ENCODE measurements at regions of chr22 and their contacts with region 1.

Region 1: GRCh38 chr22:49767355-49768062 is 60.2 kb downstream of the BRD1 start:
- DNase-seq: peak; percentile 28
- H3K4me3 Mint-ChIP-seq: no peak overlapping the region
- H3K27ac Mint-ChIP-seq: no peak overlapping the region
- H3K4me1 Mint-ChIP-seq: peaks cover 9% of the 10 kb centered on the region
- H3K27me3 Mint-ChIP-seq: no peaks in the 10 kb centered on the region

Region 2: DNA sequence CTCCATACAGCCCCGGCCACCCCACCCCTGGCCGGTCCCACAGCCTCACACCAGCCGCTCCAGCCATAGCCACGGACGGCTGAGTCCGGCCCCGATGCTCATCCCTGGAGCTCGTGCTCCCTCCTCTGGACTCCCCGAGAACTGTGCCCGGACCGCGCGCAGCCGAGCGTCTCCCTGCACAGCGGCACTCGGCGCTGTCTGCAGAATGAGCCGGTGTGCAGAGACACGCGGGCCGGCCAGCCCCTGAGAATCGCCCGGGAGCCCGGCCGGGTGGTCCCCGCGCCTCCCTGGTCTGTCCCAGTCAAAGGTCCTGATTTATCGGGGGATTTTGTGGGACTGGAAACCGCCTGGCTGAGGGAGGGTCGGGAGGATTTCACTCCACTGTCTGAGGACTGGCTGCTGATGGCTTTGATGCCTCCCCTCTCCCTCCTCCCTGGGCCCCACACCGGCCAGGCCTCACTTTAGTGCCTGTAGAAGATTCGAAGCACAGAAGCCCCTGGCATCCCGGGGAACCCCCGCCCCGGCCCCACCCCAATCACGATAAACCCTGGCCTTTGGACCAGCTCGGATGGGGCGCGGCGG is 42.5 kb before region 1 on chr22:
- intact Hi-C with region 1: no loop called
- DNase-seq: peak; percentile 61
- H3K4me3 Mint-ChIP-seq: peak overlapping the region; percentile 56
- H3K27ac Mint-ChIP-seq: no peak overlapping the region
- H3K4me1 Mint-ChIP-seq: peaks cover 5% of the 10 kb centered on the region
- H3K27me3 Mint-ChIP-seq: peaks cover 13% of the 10 kb centered on the region

Region 3: DNA sequence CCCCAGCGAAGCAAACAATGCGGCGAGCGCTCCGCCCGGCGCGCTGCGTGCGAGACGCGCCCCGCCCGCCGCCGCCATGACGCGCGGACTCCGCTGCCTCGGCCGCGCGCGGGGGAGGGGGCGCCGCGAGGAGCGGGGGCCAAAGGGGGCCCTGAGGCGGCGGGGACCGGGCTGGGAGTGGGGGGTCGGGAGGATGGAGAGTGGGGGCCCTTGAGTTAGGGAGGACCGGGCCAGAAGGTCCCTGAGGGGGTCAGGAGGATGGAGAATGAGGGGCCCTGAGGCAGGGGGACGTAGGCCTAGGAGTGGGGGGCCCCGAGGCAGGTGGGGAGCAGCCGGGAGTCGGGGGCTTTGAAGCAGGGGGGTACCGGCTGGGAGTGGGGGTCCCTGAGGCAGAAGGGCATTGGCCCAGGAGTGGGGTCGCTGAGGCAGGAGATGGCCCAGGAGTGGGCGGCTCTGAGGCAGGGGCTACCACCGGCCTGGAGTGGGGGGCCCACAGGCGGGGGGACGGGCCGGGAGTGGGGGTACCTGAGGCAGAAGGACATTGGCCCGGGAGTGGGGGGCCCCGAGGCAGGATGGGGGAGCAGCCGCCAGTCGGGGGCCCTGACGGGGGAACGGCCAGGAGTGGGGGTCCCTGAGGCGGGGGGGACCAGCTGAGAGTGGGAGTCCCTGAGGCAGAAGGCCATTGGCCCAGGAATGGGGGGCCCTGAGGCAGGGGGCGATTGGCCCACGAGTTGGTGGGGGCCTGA is 60.5 kb after region 1 on chr22 and contains the start of gene BRD1:
- intact Hi-C with region 1: loop called (anchors 2 kb)
- DNase-seq: peak; percentile 54
- H3K4me3 Mint-ChIP-seq: peak within 1 kb of the TSS; percentile 92
- H3K27ac Mint-ChIP-seq: peak within 1 kb of the TSS; percentile 92
- H3K4me1 Mint-ChIP-seq: peaks cover 48% of the 10 kb centered on the region
- H3K27me3 Mint-ChIP-seq: peaks cover 3% of the 10 kb centered on the region
- total RNA-seq, gene BRD1: 45.5 and 46.8 TPM in 2 replicates

Region 4: GRCh38 chr22:49930739-49931412 is 163.4 kb after region 1 on chr22:
- intact Hi-C with region 1: loop called (anchors 1 kb)
- DNase-seq: no peak
- H3K4me3 Mint-ChIP-seq: peak overlapping the region; percentile 60
- H3K27ac Mint-ChIP-seq: peak overlapping the region; percentile 47
- H3K4me1 Mint-ChIP-seq: peaks cover 23% of the 10 kb centered on the region
- H3K27me3 Mint-ChIP-seq: no peaks in the 10 kb centered on the region

Region 5: DNA sequence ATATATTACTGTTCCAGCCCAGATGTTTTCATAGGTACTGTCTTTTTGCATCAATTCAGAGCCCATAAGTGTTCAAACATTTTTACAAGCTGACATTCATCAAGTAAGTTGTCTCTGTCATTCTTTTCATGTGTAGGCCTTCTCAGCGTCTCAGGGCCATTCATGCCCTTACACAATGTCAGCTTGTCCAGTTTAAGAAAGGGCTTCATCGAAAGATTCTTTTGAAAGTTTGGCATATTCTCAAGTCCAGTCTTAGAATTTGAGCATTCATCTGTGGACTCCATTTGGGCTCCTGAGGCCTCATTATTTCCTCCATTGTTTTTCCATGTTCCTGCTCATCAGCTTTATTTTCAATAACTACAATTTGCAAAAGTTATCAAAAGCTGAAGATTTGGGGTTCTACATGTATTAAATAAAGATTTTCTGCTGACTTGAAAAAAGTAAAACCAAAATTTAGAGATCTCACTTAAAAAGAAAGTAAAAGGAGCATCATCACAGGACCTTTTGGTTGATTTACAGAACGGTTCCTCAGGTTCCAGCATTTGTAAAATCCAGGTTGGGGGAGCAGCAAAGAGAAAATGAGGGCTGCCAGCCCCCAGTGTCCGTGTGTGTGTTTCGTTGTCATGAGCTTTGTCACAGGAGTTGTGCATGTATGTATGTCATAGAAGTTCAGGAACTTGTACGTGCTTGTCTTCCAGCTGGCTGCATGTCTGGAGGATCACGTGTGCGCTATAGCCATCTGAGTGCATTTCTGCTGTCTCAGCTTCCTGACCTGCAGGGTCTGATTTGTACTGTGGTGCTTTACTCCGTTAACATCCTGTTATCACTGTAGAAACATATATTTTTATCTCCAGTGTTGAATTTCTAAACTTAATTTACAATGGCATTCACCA is 337.9 kb after region 1 on chr22:
- intact Hi-C with region 1: no loop called
- DNase-seq: no peak
- H3K4me3 Mint-ChIP-seq: peak overlapping the region; percentile 47
- H3K27ac Mint-ChIP-seq: peak overlapping the region; percentile 73
- H3K4me1 Mint-ChIP-seq: peaks cover 14% of the 10 kb centered on the region
- H3K27me3 Mint-ChIP-seq: peaks cover 3% of the 10 kb centered on the region

Region 6: DNA sequence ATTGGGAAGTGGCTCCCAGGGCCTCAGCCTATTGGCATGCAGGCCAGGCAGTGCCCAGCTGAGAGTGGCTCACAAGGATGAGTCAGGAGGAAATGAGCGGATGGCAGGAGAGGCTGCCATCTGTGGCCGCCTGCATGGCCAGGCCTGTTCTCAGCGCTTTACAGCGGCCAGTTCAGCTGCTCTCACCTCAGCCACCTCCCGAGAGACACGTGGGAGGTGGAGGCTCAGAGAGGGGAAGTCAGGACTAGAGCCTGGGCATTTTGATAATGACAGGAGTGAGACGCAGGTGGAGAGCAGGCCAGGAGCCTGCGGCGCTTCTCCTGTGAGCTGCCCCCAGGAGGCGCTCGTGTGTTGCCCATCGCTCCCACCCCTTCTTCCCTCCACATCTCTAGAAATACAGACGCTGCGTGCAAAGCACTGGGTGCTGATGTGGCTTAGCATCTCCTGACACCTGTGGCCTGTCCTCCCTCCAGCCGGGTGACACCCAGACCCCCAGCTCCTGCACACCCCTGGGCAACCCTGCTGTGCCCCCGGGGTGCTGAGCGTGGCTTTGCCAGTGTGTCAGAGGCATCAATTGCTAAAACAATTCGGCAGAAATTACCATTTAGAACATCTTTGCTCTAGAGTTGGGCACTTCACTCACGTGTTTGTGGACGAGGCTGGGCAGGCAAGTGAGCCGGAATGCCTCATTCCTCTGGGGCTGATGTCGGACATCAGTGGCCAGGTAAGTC is 381.6 kb after region 1 on chr22:
- intact Hi-C with region 1: loop called (anchors 2 kb)
- DNase-seq: peak; percentile 61
- H3K4me3 Mint-ChIP-seq: no peak overlapping the region
- H3K27ac Mint-ChIP-seq: no peak overlapping the region
- H3K4me1 Mint-ChIP-seq: peaks cover 8% of the 10 kb centered on the region
- H3K27me3 Mint-ChIP-seq: no peaks in the 10 kb centered on the region